Psoas muscle (tissue), 8 donors: ENCODE measurements at regions of chr22 and their contacts with region 1.

Region 1: DNA sequence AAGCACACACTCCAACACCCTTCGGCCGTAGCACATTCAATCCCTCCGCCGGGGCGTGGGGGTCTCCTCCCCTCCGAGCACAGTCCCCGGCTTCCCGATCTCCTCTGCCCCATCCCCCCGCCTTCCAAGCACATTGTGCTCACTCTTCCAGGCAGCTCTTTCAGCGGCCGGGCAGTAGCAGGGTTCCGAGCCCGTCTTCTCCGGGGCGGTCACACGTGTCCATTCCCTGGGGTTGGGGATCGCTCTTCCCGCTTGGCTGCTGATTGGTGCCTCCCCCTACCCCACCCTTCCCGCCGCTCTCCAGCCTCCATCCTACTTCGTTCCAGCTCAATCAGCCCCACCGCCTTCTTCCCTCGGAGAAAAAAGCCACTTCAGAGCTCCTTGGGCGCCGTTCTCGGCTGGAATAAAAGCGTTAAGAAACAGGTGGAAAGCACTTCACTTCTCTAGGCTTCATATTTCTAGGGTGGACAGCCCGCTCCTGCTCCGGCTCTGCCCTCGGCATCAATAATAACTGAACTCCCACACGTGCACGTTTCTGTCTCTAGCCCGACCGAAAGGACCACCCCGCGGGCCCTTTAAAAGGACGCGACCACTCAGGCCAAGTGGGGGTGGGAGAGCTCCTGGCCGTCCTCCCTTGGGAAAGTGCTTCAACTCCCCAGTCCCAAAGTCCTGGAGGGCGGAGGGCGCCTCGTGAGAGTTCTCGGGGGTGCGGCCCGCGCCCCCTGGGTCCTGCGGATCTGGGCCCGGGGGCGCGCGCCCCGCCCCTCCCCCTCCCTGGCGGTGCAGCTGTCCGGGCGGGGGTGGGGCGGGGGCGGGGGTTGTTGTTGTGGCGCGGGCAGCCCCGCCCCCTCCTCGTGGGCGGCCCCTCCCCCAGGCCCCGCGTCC is 464 bp upstream of the CECR2 start:
- DNase-seq: peak; percentile 62 to 83
- ATAC-seq: peak; percentile 73 to 78 (median 76)
- H3K4me3 ChIP-seq: peak overlapping the region; percentile 92
- H3K27ac ChIP-seq: peak overlapping the region; percentile 99
- H3K4me1 ChIP-seq: peaks cover 36% of the 10 kb centered on the region
- H3K27me3 ChIP-seq: no peaks in the 10 kb centered on the region
- CTCF ChIP-seq: no peak

Region 2: GRCh38 chr22:17201285-17201945 is 167.4 kb before region 1 on chr22:
- intact Hi-C with region 1: no loop called
- DNase-seq: peak in 1 of 2 donors; percentile 3
- ATAC-seq: no peak
- H3K4me3 ChIP-seq: no peak overlapping the region
- H3K27ac ChIP-seq: no peak overlapping the region
- H3K4me1 ChIP-seq: no peaks in the 10 kb centered on the region
- H3K27me3 ChIP-seq: no peaks in the 10 kb centered on the region
- CTCF ChIP-seq: peak; percentile 22

Region 3: DNA sequence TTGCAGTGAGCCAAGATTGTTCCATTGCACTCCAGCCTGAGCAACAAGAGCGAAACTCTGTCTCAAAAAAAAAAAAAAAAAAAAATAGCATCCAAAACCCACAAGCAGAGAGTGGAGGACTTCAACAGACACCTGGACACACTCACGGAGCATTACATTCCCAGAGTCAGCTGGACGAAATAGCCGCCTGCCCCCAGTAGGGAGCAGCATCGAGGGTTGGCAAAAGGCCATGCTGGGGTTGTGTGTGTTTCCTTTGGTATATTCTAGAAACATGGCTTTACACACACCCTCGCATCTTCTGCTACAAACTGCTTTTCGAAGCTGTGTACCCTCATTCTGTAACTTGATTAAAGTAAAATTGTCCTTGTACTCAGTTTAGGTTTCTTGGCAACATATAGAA is 154.8 kb before region 1 on chr22:
- intact Hi-C with region 1: loop called in 1 of 2 experiments (anchors 5 kb)
- DNase-seq: peak; percentile 68 to 83
- ATAC-seq: peak; percentile 68 to 89 (median 84)
- H3K4me3 ChIP-seq: no peak overlapping the region
- H3K27ac ChIP-seq: no peak overlapping the region
- H3K4me1 ChIP-seq: no peaks in the 10 kb centered on the region
- H3K27me3 ChIP-seq: no peaks in the 10 kb centered on the region
- CTCF ChIP-seq: peak; percentile 56

Region 4: DNA sequence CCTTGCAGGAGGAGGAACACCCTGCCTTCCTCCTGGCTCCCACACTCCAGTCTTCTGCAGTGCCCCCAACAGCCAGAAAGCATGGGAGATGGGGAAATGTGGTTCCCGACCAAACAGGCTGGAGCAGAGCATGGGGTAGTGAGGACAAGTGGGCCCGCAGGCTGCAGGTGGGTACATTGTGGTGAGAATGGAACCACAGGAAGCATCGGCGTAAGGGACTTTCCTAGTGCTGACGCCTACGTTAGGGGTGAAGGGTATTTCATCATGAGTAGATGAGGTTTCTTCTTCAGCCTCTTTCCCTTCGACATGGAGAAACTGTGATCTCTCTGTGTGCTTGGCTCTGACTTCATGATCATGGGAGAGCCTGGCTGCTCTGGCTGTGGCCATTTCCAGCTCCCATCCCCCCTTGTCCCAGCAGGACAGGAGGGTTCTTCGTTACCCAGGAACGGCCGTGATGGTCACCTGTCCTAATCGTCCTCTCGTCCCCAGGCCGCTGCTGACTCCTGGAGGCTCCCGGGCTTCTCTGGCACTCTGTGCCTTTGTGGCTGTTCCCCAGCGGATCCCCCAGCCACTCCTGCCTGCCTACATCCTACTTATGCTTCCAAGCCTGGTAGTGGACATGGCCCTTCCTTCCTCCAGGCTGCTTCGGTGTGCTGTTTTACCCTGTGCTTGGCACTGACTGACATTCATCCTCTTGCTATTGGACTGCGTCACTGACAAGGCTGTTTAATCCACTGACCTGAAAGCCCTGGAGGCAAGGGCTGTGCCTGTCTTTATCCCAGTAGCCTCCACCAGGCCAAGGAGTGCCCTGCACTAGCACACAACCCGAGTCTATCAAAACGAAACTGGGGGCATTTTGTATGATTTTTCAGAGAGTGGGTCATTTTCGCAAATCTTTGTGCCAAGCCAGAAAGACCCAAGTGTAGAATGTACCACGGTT is 64.7 kb before region 1 on chr22:
- intact Hi-C with region 1: no loop called
- DNase-seq: no peak
- ATAC-seq: peak; percentile 78 to 86 (median 81)
- H3K4me3 ChIP-seq: no peak overlapping the region
- H3K27ac ChIP-seq: peak overlapping the region; percentile 54
- H3K4me1 ChIP-seq: peaks cover 10% of the 10 kb centered on the region
- H3K27me3 ChIP-seq: no peaks in the 10 kb centered on the region
- CTCF ChIP-seq: no peak

Region 5: DNA sequence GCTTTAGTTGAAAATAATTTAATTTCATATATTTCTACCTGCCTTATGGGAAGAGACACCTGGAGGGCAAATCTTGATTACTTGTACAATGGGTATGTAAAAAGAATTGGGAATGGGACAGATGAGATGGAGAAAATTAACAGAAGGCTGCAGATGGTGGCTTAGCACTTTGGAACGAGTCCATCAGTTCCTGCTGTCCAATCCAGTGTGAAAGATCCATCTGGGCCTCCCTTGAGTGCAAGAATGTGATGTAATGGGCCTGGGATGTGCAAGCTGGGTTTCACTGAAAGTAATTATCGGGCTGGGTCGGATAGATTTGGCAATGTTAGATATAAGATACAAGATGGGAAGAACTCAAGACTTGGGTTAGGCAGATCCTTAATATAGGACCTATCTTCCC is 42.4 kb after region 1 on chr22:
- intact Hi-C with region 1: loop called in 1 of 2 experiments (anchors 5 kb)
- DNase-seq: no peak
- ATAC-seq: peak in 2 of 4 donors; percentile 29 to 37
- H3K4me3 ChIP-seq: no peak overlapping the region
- H3K27ac ChIP-seq: peak overlapping the region; percentile 67
- H3K4me1 ChIP-seq: peaks cover 59% of the 10 kb centered on the region
- H3K27me3 ChIP-seq: no peaks in the 10 kb centered on the region
- CTCF ChIP-seq: no peak

Region 6: GRCh38 chr22:17443405-17444203 is 74.8 kb after region 1 on chr22:
- intact Hi-C with region 1: loop called in 1 of 2 experiments (anchors 5 kb)
- DNase-seq: peak; percentile 30 to 62
- ATAC-seq: peak; percentile 81 to 89 (median 84)
- H3K4me3 ChIP-seq: peak overlapping the region; percentile 53
- H3K27ac ChIP-seq: peak overlapping the region; percentile 86
- H3K4me1 ChIP-seq: peaks cover 34% of the 10 kb centered on the region
- H3K27me3 ChIP-seq: no peaks in the 10 kb centered on the region
- CTCF ChIP-seq: no peak

Region 7: DNA sequence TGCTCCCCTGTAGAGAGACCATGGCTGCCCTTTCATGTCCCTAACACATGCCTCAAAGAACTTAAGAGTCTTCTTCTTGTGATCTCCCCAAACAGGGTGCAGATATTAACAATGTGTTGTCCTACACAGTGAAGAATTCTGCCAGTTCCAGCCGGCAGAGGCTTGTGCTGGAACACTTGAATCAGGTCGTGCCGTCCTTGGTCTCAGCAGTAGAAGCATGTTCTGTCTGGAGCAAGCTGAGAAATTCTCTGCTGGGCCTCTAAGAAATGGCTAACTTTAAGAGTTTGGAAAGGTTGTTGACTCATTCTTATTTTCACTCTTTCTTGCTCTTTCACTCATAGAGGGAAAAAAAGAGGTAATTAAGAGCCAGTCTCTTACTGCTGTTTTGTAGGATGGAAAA is 123.5 kb after region 1 on chr22:
- intact Hi-C with region 1: loop called in 1 of 2 experiments (anchors 5 kb)
- DNase-seq: no peak
- ATAC-seq: peak in 3 of 4 donors; percentile 36 to 77 (median 60)
- H3K4me3 ChIP-seq: no peak overlapping the region
- H3K27ac ChIP-seq: peak overlapping the region; percentile 46
- H3K4me1 ChIP-seq: peaks cover 25% of the 10 kb centered on the region
- H3K27me3 ChIP-seq: no peaks in the 10 kb centered on the region
- CTCF ChIP-seq: no peak